Activated T-helper 2 cell treated with anti-CD3 and anti-CD28 coated beads, Interferon-gamma antibody, Interleukin-2, Interleukin-4, amounts not matched to agents 10 μg/mL and 5 μg/mL and 100 μg/mL, durations not matched to agents 14 hours and 24 hours and 36 hours (primary cell): ENCODE measurements at regions of chr6 and their contacts with region 1.

Region 1: GRCh38 chr6:28349892-28350737 is at the start of gene ZKSCAN3:
- DNase-seq: peak; percentile 81
- H3K4me3 Mint-ChIP-seq: peak within 1 kb of the TSS; percentile 99
- H3K27ac Mint-ChIP-seq: peak within 1 kb of the TSS; percentile 93
- H3K4me1 Mint-ChIP-seq: peaks cover 22% of the 10 kb centered on the region
- H3K27me3 Mint-ChIP-seq: peaks cover 21% of the 10 kb centered on the region
- total RNA-seq, gene ZKSCAN3: 3.5 TPM in 2 replicates

Region 2: DNA sequence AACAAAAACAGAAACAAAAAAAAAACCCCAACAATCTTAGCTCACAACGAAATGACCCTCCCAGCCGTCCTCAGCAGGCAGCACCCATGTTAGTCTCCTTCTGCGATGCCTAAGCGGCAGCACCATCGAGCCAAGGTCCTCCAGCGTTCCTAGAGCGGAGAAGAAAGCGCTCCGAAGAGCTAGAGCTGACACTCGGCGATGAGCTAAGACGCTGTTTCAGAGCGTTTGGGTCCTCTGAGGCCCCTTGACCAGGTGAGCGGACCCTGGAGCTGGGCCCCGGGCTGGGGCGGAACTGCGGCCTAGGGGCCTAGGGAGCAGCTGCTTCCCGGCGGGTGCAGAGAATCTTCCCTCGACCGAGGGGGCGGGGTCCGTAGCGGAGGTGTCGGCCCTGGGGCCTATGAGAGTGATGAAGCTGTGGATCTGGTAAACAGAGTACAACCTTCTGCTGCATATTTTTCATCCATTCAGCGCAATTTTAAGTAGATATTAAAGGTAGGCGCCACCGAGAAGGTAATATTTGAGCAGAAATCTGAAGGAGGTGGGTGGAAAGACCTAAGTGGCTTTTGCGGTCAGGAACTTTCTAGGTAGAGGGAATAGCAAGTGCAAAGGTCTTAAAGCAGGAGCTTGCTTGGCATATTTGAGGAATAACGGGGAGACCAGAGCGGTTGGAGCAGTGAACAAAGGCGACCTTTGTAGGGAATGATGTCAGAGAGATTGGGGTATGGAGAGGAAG is 83.0 kb before region 1 on chr6 and contains the start of gene ZSCAN26:
- intact Hi-C with region 1: loop called (anchors 2 kb)
- DNase-seq: peak; percentile 79
- H3K4me3 Mint-ChIP-seq: no peak within 1 kb of the TSS
- H3K27ac Mint-ChIP-seq: no peak within 1 kb of the TSS
- H3K4me1 Mint-ChIP-seq: peaks cover 28% of the 10 kb centered on the region
- H3K27me3 Mint-ChIP-seq: peaks cover 10% of the 10 kb centered on the region
- total RNA-seq, gene ZSCAN26: 6.1 and 7.7 TPM in 2 replicates